Vagina (tissue), 2 donors: ENCODE measurements at regions of chr5 and their contacts with region 1.

Region 1: GRCh38 chr5:82728926-82729702 is 348.1 kb downstream of the TMEM167A start:
- DNase-seq: no peak
- H3K4me3 ChIP-seq: no peak overlapping the region
- H3K27ac ChIP-seq: no peak overlapping the region
- H3K4me1 ChIP-seq: no peaks in the 10 kb centered on the region
- H3K27me3 ChIP-seq: no peaks in the 10 kb centered on the region
- CTCF ChIP-seq: no peak
- POLR2A ChIP-seq: no peak

Region 2: DNA sequence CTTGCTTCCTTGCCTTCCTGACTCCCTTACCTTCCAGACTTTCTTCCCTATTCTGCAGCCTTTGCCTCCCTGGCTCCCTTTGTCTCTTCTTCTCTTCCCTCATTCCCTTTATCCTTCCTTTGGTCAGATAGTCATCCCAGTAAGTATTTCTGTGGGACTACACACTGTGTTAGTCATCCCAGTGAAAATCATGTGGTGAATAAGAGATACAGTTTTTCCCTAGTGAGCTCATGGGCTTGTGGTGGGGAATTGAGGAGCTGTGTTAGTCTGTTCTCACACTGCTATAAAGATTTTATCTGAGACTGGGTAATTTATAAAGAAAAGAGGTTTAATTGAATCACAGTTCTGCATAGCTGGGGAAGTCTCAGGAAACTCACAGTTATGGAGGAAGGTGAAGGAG is 1765.3 kb after region 1 on chr5:
- intact Hi-C with region 1: loop called (anchors 5 kb)
- DNase-seq: no peak
- H3K4me3 ChIP-seq: no peak overlapping the region
- H3K27ac ChIP-seq: no peak overlapping the region
- H3K4me1 ChIP-seq: no peaks in the 10 kb centered on the region
- H3K27me3 ChIP-seq: no peaks in the 10 kb centered on the region
- CTCF ChIP-seq: no peak
- POLR2A ChIP-seq: no peak